A673 (cell line): ENCODE measurements at regions of chr10 and their contacts with region 1.

Region 1: DNA sequence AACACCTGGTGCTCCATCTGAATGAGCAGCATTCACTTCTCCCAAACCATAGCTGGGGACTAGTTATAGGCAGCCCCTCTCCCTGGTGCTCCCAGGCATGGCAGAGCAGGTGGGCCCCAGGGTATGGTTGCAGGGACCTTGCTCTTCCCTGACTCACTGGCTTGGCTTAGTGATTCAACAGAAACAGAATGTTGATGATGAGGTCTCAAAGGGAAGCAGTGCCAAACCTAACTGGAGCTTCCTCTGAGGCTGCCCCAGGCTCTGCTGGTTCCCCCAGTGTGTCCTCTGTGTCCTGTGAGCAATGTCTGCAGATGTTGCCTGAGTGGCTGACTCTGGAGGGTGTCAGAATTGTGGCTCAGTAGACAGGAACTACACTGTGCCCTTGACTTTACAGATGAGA is 3.7 kb downstream of the GPR26 start:
- DNase-seq: no peak
- H3K4me3 ChIP-seq: no peak overlapping the region
- H3K27ac ChIP-seq: no peak overlapping the region
- H3K4me1 ChIP-seq: no peaks in the 10 kb centered on the region
- H3K27me3 ChIP-seq: peaks cover 83% of the 10 kb centered on the region
- CTCF ChIP-seq: no peak

Region 2: GRCh38 chr10:123681285-123681684 is 11.4 kb after region 1 on chr10:
- CTCF ChIA-PET with region 1: no interaction called
- POLR2A ChIA-PET with region 1: interaction called, 15 read pairs
- intact Hi-C with region 1: no loop called
- DNase-seq: no peak
- H3K4me3 ChIP-seq: no peak overlapping the region
- H3K27ac ChIP-seq: no peak overlapping the region
- H3K4me1 ChIP-seq: no peaks in the 10 kb centered on the region
- H3K27me3 ChIP-seq: peaks cover 36% of the 10 kb centered on the region
- CTCF ChIP-seq: no peak